HepG2 (cell line): ENCODE measurements at regions of chr7 and their contacts with region 1.

Region 1: GRCh38 chr7:105830391-105831301 is 45.8 kb downstream of the ATXN7L1 start:
- DNase-seq: peak; percentile 88
- ATAC-seq: peak; percentile 56
- H3K4me3 ChIP-seq: no peak overlapping the region
- H3K27ac ChIP-seq: peak overlapping the region; percentile 45
- H3K4me1 ChIP-seq: peaks cover 68% of the 10 kb centered on the region
- H3K27me3 ChIP-seq: no peaks in the 10 kb centered on the region
- CTCF ChIP-seq: no peak
- EP300 ChIP-seq: peak in 1 of 2 experiments; percentile 64; a peak in 2 of 4 replicates
- POLR2A ChIP-seq: no peak
- RAD21 ChIP-seq: no peak

Region 2: GRCh38 chr7:105748701-105749100 is 81.9 kb before region 1 on chr7:
- CTCF ChIA-PET with region 1: no interaction called
- POLR2A ChIA-PET with region 1: no interaction called
- in situ Hi-C with region 1: no loop called
- intact Hi-C with region 1: no loop called
- DNase-seq: no peak
- ATAC-seq: no peak
- H3K4me3 ChIP-seq: no peak overlapping the region
- H3K27ac ChIP-seq: no peak overlapping the region
- H3K4me1 ChIP-seq: no peaks in the 10 kb centered on the region
- H3K27me3 ChIP-seq: no peaks in the 10 kb centered on the region; a peak in 1 of 5 replicates
- CTCF ChIP-seq: no peak
- EP300 ChIP-seq: no peak
- POLR2A ChIP-seq: no peak
- RAD21 ChIP-seq: no peak

Region 3: DNA sequence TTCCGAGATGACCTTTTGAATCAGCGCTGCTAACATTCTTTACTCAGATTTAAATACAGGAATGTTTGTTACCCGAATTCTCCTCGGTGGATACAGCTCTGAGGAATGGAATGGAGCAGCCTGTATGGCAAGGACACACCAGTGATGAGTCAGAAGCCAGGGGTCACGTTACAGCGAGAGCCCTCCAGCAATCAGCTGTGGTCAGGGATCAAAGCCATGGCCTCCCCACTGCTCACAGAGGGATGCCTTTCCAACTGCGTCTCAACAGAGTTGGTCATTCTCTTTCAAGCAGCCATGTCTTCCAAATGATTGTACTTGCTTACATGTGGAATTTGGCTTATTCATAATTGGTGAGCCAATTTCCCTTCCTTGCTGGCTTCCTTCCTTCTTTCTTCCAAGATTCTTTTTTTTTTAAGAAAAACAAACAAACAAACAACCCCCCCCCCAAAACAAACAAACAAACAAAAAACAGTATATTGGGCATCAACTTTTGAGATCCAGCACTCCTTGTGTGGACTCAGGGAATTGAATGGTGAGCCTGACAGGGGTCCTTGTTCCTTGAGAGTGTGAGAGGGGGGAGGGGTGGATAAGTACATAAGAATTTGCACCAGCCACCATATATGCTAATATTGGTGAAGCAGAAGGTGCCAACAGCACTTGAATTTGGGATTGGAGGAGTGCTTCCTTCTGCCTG is 54.4 kb before region 1 on chr7:
- CTCF ChIA-PET with region 1: no interaction called
- POLR2A ChIA-PET with region 1: no interaction called
- in situ Hi-C with region 1: no loop called
- intact Hi-C with region 1: loop called (anchors 1 kb)
- DNase-seq: peak; percentile 90
- ATAC-seq: peak; percentile 100
- H3K4me3 ChIP-seq: no peak overlapping the region
- H3K27ac ChIP-seq: no peak overlapping the region
- H3K4me1 ChIP-seq: peaks cover 14% of the 10 kb centered on the region
- H3K27me3 ChIP-seq: no peaks in the 10 kb centered on the region
- CTCF ChIP-seq: no peak
- EP300 ChIP-seq: peak in 1 of 2 experiments; percentile 38; a peak in 1 of 4 replicates
- POLR2A ChIP-seq: no peak
- RAD21 ChIP-seq: no peak

Region 4: GRCh38 chr7:105810556-105810955 is 20.1 kb before region 1 on chr7:
- CTCF ChIA-PET with region 1: no interaction called
- POLR2A ChIA-PET with region 1: interaction called, 4 read pairs
- in situ Hi-C with region 1: no loop called
- intact Hi-C with region 1: loop called (anchors 2 kb)
- DNase-seq: no peak
- ATAC-seq: no peak
- H3K4me3 ChIP-seq: no peak overlapping the region
- H3K27ac ChIP-seq: no peak overlapping the region
- H3K4me1 ChIP-seq: peaks cover 22% of the 10 kb centered on the region
- H3K27me3 ChIP-seq: no peaks in the 10 kb centered on the region
- CTCF ChIP-seq: no peak
- EP300 ChIP-seq: no peak
- POLR2A ChIP-seq: no peak
- RAD21 ChIP-seq: no peak

Region 5: GRCh38 chr7:105871142-105871541 is 40.5 kb after region 1 on chr7:
- CTCF ChIA-PET with region 1: no interaction called
- POLR2A ChIA-PET with region 1: no interaction called
- in situ Hi-C with region 1: no loop called
- intact Hi-C with region 1: no loop called
- DNase-seq: no peak
- ATAC-seq: no peak
- H3K4me3 ChIP-seq: no peak overlapping the region
- H3K27ac ChIP-seq: no peak overlapping the region
- H3K4me1 ChIP-seq: peaks cover 18% of the 10 kb centered on the region
- H3K27me3 ChIP-seq: no peaks in the 10 kb centered on the region; a peak in 1 of 5 replicates
- CTCF ChIP-seq: no peak
- EP300 ChIP-seq: no peak
- POLR2A ChIP-seq: no peak
- RAD21 ChIP-seq: no peak